Activated naive CD8-positive, alpha-beta T cell treated with anti-CD3 and anti-CD28 coated beads, Interleukin-2, amount 10 ng/mL, durations not matched to agents 7 days and 5 days (primary cell): ENCODE measurements at regions of chr14 and their contacts with region 1.

Region 1: GRCh38 chr14:52325126-52325525 is 11.0 kb downstream of the PTGER2 start:
- DNase-seq: no peak
- ATAC-seq: peak; percentile 93
- H3K4me3 Mint-ChIP-seq: peak overlapping the region; percentile 78
- H3K27ac Mint-ChIP-seq: peak overlapping the region; percentile 71
- H3K4me1 Mint-ChIP-seq: peaks cover 75% of the 10 kb centered on the region
- H3K27me3 Mint-ChIP-seq: no peaks in the 10 kb centered on the region

Region 2: GRCh38 chr14:52402812-52403526 is 77.8 kb after region 1 on chr14:
- POLR2A ChIA-PET with region 1: interaction called, 129 read pairs
- DNase-seq: no peak
- ATAC-seq: peak; percentile 54
- H3K4me3 Mint-ChIP-seq: peak overlapping the region; percentile 37
- H3K27ac Mint-ChIP-seq: peak overlapping the region; percentile 79
- H3K4me1 Mint-ChIP-seq: peaks cover 69% of the 10 kb centered on the region
- H3K27me3 Mint-ChIP-seq: no peaks in the 10 kb centered on the region